ENCODE measurements at regions of chr22 and their contacts with region 1.

Region 1: GRCh38 chr22:38317122-38317994 is at the start of gene CSNK1E:
- DNase-seq: peak; percentile 39 to 85 (median 73)
- ATAC-seq: peak; percentile 61
- H3K4me3 ChIP-seq: peak within 1 kb of the TSS; percentile 59 to 60
- H3K4me3 Mint-ChIP-seq: peak within 1 kb of the TSS; percentile 88
- H3K27ac ChIP-seq: peak within 1 kb of the TSS; percentile 80 to 89
- H3K27ac Mint-ChIP-seq: peak within 1 kb of the TSS; percentile 96
- H3K4me1 ChIP-seq: peaks cover 43% of the 10 kb centered on the region
- H3K4me1 Mint-ChIP-seq: peaks cover 45% of the 10 kb centered on the region
- H3K27me3 ChIP-seq: no peaks in the 10 kb centered on the region
- H3K27me3 Mint-ChIP-seq: no peaks in the 10 kb centered on the region
- CTCF ChIP-seq: no peak
- total RNA-seq, gene CSNK1E: 172 to 178 TPM

Region 2: GRCh38 chr22:38056969-38057891 is 260.1 kb before region 1 on chr22 and contains the start of gene PICK1:
- CTCF ChIA-PET with region 1: no interaction called
- POLR2A ChIA-PET with region 1: no interaction called
- intact Hi-C with region 1: loop called in 1 of 2 experiments (anchors 1 kb)
- DNase-seq: peak; percentile 56 to 89 (median 77)
- ATAC-seq: peak; percentile 80
- H3K4me3 ChIP-seq: peak within 1 kb of the TSS; percentile 83 to 97
- H3K4me3 Mint-ChIP-seq: peak within 1 kb of the TSS; percentile 98
- H3K27ac ChIP-seq: peak within 1 kb of the TSS; percentile 79 to 91
- H3K27ac Mint-ChIP-seq: peak within 1 kb of the TSS; percentile 98
- H3K4me1 ChIP-seq: peaks cover 15% of the 10 kb centered on the region
- H3K4me1 Mint-ChIP-seq: peaks cover 19% of the 10 kb centered on the region
- H3K27me3 ChIP-seq: no peaks in the 10 kb centered on the region
- H3K27me3 Mint-ChIP-seq: no peaks in the 10 kb centered on the region
- CTCF ChIP-seq: no peak
- total RNA-seq, gene PICK1: 23.1 to 24.8 TPM

Region 3: GRCh38 chr22:38272373-38273134 is 44.8 kb before region 1 on chr22 and contains the start of gene TMEM184B:
- CTCF ChIA-PET with region 1: interaction called, 3 read pairs
- POLR2A ChIA-PET with region 1: interaction called, 5 read pairs
- intact Hi-C with region 1: loop called (anchors 1 kb)
- DNase-seq: peak; percentile 62 to 93 (median 78)
- ATAC-seq: peak; percentile 94
- H3K4me3 ChIP-seq: peak within 1 kb of the TSS; percentile 70 to 77
- H3K4me3 Mint-ChIP-seq: peak within 1 kb of the TSS; percentile 92
- H3K27ac ChIP-seq: peak within 1 kb of the TSS; percentile 59 to 93
- H3K27ac Mint-ChIP-seq: peak within 1 kb of the TSS; percentile 95
- H3K4me1 ChIP-seq: peaks cover 31% of the 10 kb centered on the region
- H3K4me1 Mint-ChIP-seq: peaks cover 50% of the 10 kb centered on the region
- H3K27me3 ChIP-seq: no peaks in the 10 kb centered on the region
- H3K27me3 Mint-ChIP-seq: peaks cover 3% of the 10 kb centered on the region
- CTCF ChIP-seq: no peak
- total RNA-seq, gene TMEM184B: 53.0 TPM